Heart right ventricle (tissue), 16 donors: ENCODE measurements at regions of chr13 and their contacts with region 1.

Region 1: GRCh38 chr13:67075239-67075638 is 154.9 kb downstream of the PCDH9 start:
- DNase-seq: no peak
- ATAC-seq: peak in 7 of 8 donors; percentile 43 to 77 (median 72)
- H3K4me3 ChIP-seq: peak overlapping the region in 6 of 10 donors; percentile 28 to 37 (median 35)
- H3K27ac ChIP-seq: no peak overlapping the region
- H3K4me1 ChIP-seq: peaks cover 0 to 3% (median 0%) of the 10 kb centered on the region in 9 donors
- H3K27me3 ChIP-seq: no peaks in the 10 kb centered on the region
- CTCF ChIP-seq: peak in 6 of 9 donors; percentile 33 to 62 (median 52)

Region 2: DNA sequence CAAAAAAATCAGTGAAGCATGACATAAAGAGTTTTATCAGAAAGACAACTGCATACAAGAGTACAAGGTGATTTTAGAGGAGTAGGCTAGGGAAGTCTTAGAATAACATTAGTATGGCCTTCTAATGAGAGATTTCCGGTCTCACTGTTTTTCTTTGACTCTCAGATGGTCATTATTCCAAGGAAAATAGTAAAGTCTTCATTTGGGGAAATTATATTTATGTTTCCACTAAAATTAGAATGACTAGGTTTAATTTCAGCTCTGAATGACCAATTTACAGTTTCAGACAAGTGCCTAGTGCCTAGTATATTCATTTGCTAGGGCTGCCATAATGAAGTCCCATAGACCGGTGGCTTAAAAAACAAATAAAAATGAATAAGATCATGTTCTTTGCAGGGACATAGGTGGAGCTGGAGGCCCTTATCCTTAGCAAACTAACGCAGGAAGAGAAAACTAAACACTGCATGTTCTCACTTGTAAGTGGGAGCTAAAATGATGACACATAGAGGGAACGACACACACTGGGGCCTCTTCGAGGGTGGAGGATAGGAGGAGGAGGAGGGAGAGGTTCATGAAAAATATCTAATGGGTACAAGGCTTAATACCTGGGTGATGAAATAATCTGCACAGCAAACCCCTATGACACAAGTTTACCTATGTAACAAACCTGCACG is 148.3 kb before region 1 on chr13:
- intact Hi-C with region 1: no loop called
- DNase-seq: no peak
- ATAC-seq: no peak
- H3K4me3 ChIP-seq: no peak overlapping the region
- H3K27ac ChIP-seq: no peak overlapping the region
- H3K4me1 ChIP-seq: no peaks in the 10 kb centered on the region
- H3K27me3 ChIP-seq: no peaks in the 10 kb centered on the region
- CTCF ChIP-seq: no peak

Region 3: GRCh38 chr13:66994097-66994496 is 81.1 kb before region 1 on chr13:
- intact Hi-C with region 1: loop called in 1 of 10 experiments (anchors 5 kb)
- DNase-seq: peak; percentile 50 to 75
- ATAC-seq: peak; percentile 91 to 99 (median 96)
- H3K4me3 ChIP-seq: peak overlapping the region in 9 of 10 donors; percentile 11 to 49 (median 42)
- H3K27ac ChIP-seq: peak overlapping the region in 1 of 10 donors; percentile 22
- H3K4me1 ChIP-seq: peaks cover 0 to 14% (median 6%) of the 10 kb centered on the region in 9 donors
- H3K27me3 ChIP-seq: no peaks in the 10 kb centered on the region
- CTCF ChIP-seq: peak in 8 of 9 donors; percentile 24 to 75 (median 64)

Region 4: GRCh38 chr13:67217880-67218279 is 142.6 kb after region 1 on chr13:
- intact Hi-C with region 1: loop called in 8 of 10 experiments (anchors 2 to 10 kb)
- DNase-seq: no peak
- ATAC-seq: no peak
- H3K4me3 ChIP-seq: no peak overlapping the region
- H3K27ac ChIP-seq: no peak overlapping the region
- H3K4me1 ChIP-seq: peaks cover 0 to 39% (median 5%) of the 10 kb centered on the region in 9 donors
- H3K27me3 ChIP-seq: no peaks in the 10 kb centered on the region
- CTCF ChIP-seq: no peak